ENCODE measurements at regions of chr19 and their contacts with region 1.

Region 1: GRCh38 chr19:33134571-33135041 is 2.7 kb downstream of the WDR88 start:
- DNase-seq: peak; percentile 69
- CTCF ChIP-seq: no peak

Region 2: DNA sequence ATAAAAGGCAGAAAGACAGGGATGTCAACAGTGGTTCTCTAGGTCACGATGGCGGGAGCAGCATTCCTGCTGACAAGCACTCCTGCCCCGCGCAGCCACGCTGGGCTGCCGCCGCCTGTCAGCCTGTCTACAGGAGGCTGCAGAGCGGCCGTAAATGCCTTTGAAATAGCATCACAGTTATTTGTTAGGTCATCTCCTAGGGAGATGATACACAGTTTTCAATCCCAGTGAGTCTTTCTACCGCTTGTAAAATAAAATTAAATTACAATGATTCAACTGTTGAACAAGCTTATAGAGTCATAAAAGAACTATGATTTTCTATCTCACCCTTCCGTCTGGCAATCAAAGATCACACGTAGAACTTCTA is 257.7 kb before region 1 on chr19:
- CTCF ChIA-PET with region 1: no interaction called
- POLR2A ChIA-PET with region 1: no interaction called
- DNase-seq: no peak
- CTCF ChIP-seq: no peak

Region 3: DNA sequence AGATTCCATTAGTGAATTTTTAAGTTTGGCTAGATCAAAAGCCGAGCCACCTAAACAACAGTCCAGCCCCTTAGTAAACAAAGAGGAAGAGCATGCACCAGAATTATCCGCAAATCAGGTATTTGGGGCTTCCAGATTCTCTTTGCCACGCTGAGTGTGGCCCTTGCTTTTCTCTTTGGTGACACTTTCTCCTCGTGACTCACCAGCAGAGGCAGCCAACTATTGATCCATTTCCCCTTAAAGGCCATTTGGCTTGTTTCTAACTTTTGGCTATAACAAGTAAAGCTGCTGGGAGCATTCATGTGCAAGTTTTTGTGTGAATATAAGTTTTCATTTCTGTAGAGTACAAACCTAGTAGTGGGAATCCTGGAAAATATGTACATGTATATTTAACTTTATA is 20.3 kb before region 1 on chr19:
- CTCF ChIA-PET with region 1: no interaction called
- POLR2A ChIA-PET with region 1: no interaction called
- DNase-seq: no peak
- CTCF ChIP-seq: no peak

Region 4: GRCh38 chr19:33186431-33187182 is 52.0 kb after region 1 on chr19:
- CTCF ChIA-PET with region 1: interaction called, 16 read pairs
- POLR2A ChIA-PET with region 1: no interaction called
- DNase-seq: no peak
- CTCF ChIP-seq: no peak